GM18951 (cell line): ENCODE measurements at regions of chr10 and their contacts with region 1.

Region 1: DNA sequence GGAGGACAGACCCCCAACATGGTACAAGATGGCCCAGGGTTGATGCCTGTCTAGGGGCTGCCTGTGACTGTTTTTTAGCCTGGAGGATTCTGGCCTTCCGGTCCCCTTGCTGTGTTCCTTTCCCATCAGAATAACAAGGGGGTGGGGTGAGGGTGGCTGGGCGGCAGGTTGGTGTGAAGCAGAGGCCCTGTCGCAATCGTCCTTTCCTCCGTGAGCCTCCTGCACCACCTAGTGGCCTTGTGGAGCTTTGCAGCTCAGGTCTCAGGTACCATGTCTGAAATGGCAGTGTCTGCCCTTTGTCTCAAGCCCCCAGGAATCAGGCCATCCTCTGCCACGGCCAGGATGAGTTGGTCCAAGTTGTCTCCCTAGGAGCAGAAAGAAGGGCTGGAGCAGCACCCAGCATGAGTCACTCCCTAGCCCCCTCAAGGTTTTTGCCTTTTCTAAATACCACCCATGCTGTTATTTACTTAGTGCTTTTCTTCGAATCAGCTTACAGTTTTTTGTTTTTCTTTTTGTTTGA is 24.2 kb downstream of the TACR2 start:
- POLR2A ChIP-seq: no peak

Region 2: DNA sequence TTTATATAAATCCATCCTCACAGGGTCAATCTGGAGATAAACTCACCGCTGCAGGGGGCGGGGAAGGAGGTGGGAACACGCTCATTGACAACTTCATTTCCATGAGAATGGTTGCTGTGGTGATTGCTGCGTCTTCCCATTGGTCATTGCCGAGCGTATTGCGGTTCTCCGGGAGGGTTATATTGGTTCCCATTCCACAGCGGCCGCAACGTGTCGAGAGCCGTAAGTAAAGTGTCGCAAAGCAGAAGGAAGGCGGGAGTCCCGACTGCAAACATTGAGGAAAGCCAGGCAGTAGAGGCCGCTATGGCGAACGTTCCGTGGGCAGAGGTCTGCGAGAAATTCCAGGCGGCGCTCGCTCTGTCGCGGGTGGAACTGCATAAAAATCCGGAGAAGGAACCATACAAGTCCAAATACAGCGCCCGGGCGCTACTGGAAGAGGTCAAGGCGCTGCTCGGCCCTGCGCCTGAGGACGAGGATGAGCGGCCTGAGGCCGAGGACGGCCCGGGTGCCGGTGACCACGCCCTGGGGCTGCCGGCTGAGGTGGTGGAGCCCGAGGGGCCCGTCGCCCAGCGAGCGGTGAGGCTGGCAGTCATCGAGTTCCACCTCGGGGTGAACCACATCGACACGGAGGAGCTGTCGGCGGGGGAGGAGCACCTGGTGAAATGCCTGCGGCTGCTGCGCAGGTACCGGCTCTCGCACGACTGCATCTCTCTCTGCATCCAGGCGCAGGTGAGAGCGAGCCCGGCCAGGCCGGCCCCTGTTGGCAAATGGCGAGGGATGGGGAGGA is 403.8 kb before region 1 on chr10 and contains the start of gene KIFBP:
- in situ Hi-C with region 1: loop called (anchors 25 kb)
- POLR2A ChIP-seq: peak; percentile 76

Region 3: GRCh38 chr10:69248117-69248730 is 144.3 kb before region 1 on chr10:
- in situ Hi-C with region 1: loop called (anchors 5 kb)
- POLR2A ChIP-seq: no peak

Region 4: DNA sequence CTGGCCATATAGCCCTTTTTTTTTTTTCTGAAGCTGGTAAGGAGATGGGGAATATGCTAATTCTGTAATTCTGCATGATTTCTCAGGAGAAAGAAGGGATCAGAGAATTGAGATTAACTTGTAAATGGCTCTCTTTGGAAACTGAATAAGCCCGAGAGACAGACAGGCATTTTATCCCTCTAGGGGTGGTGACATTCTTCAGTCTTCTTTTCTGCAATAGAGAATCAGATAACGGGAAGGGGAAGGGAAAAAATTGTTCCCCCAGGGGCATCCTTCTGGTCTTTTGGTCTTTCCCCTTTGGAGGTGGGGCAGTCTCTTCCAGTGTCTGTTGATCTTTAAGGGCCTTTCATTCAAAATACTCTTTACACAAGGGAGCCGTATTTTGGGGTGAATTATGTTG is 80.0 kb before region 1 on chr10:
- in situ Hi-C with region 1: no loop called
- POLR2A ChIP-seq: no peak